Activated B cell treated with CpG ODN at 0.5 μM for 24 hours (primary cell): ENCODE measurements at regions of chr2 and their contacts with region 1.

Region 1: GRCh38 chr2:42754021-42754775 is 9.7 kb downstream of the OXER1 start:
- DNase-seq: peak; percentile 49
- ATAC-seq: peak; percentile 72
- H3K4me3 Mint-ChIP-seq: peak overlapping the region; percentile 39
- H3K27ac Mint-ChIP-seq: peak overlapping the region; percentile 75
- H3K4me1 Mint-ChIP-seq: peaks cover 47% of the 10 kb centered on the region
- H3K27me3 Mint-ChIP-seq: no peaks in the 10 kb centered on the region
- CTCF ChIP-seq: no peak

Region 2: GRCh38 chr2:42722320-42723190 is 31.6 kb before region 1 on chr2:
- CTCF ChIA-PET with region 1: no interaction called
- POLR2A ChIA-PET with region 1: interaction called, 3 read pairs
- intact Hi-C with region 1: loop called (anchors 2 kb)
- DNase-seq: no peak
- ATAC-seq: peak; percentile 91
- H3K4me3 Mint-ChIP-seq: peak overlapping the region; percentile 17
- H3K27ac Mint-ChIP-seq: peak overlapping the region; percentile 21
- H3K4me1 Mint-ChIP-seq: peaks cover 11% of the 10 kb centered on the region
- H3K27me3 Mint-ChIP-seq: no peaks in the 10 kb centered on the region
- CTCF ChIP-seq: no peak

Region 3: DNA sequence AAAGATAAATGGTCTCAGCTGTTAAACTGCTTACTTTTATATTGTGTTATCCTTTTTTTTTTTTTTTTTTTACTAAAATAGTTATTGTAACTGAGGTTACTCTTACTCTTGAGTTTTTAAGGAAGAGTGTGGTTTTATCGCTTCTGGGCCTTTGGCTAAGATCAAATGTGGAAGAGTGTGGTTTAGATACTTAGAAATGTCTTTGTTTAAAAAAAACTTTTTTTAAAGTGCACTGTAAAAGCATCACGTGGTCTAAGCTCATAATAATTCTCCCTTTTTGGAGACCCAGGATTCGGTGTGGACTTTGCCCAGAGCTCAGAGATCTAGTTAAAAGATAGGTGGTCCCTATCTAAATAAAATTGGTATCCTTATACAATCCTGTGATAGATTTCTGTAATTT is 21.6 kb after region 1 on chr2:
- CTCF ChIA-PET with region 1: interaction called, 3 read pairs
- POLR2A ChIA-PET with region 1: interaction called, 14 read pairs
- intact Hi-C with region 1: no loop called
- DNase-seq: no peak
- ATAC-seq: no peak
- H3K4me3 Mint-ChIP-seq: no peak overlapping the region
- H3K27ac Mint-ChIP-seq: no peak overlapping the region
- H3K4me1 Mint-ChIP-seq: peaks cover 10% of the 10 kb centered on the region
- H3K27me3 Mint-ChIP-seq: no peaks in the 10 kb centered on the region
- CTCF ChIP-seq: no peak